MCF 10A (cell line): ENCODE measurements at regions of chr1 and their contacts with region 1.

Region 1: GRCh38 chr1:170765712-170766330 is 101.9 kb downstream of the PRRX1 start:
- DNase-seq: peak; percentile 54
- H3K4me3 Mint-ChIP-seq: no peak overlapping the region
- H3K27ac Mint-ChIP-seq: no peak overlapping the region
- H3K4me1 Mint-ChIP-seq: no peaks in the 10 kb centered on the region
- H3K27me3 Mint-ChIP-seq: no peaks in the 10 kb centered on the region
- CTCF ChIP-seq: peak; percentile 74

Region 2: GRCh38 chr1:169928438-169929209 is 837.2 kb before region 1 on chr1:
- CTCF ChIA-PET with region 1: interaction called, 6 read pairs
- POLR2A ChIA-PET with region 1: no interaction called
- intact Hi-C with region 1: loop called (anchors 1 kb)
- DNase-seq: peak; percentile 67
- H3K4me3 Mint-ChIP-seq: no peak overlapping the region
- H3K27ac Mint-ChIP-seq: no peak overlapping the region
- H3K4me1 Mint-ChIP-seq: no peaks in the 10 kb centered on the region
- H3K27me3 Mint-ChIP-seq: no peaks in the 10 kb centered on the region
- CTCF ChIP-seq: peak; percentile 84

Region 3: GRCh38 chr1:170010443-170010842 is 755.4 kb before region 1 on chr1:
- CTCF ChIA-PET with region 1: interaction called, 6 read pairs
- POLR2A ChIA-PET with region 1: no interaction called
- intact Hi-C with region 1: loop called (anchors 1 kb)
- DNase-seq: peak; percentile 74
- H3K4me3 Mint-ChIP-seq: no peak overlapping the region
- H3K27ac Mint-ChIP-seq: no peak overlapping the region
- H3K4me1 Mint-ChIP-seq: no peaks in the 10 kb centered on the region
- H3K27me3 Mint-ChIP-seq: no peaks in the 10 kb centered on the region
- CTCF ChIP-seq: peak; percentile 54

Region 4: GRCh38 chr1:170436928-170437327 is 328.9 kb before region 1 on chr1:
- CTCF ChIA-PET with region 1: no interaction called
- POLR2A ChIA-PET with region 1: no interaction called
- intact Hi-C with region 1: loop called (anchors 1 kb)
- DNase-seq: no peak
- H3K4me3 Mint-ChIP-seq: no peak overlapping the region
- H3K27ac Mint-ChIP-seq: no peak overlapping the region
- H3K4me1 Mint-ChIP-seq: no peaks in the 10 kb centered on the region
- H3K27me3 Mint-ChIP-seq: no peaks in the 10 kb centered on the region
- CTCF ChIP-seq: no peak

Region 5: GRCh38 chr1:170503691-170504090 is 262.1 kb before region 1 on chr1:
- CTCF ChIA-PET with region 1: no interaction called
- POLR2A ChIA-PET with region 1: no interaction called
- intact Hi-C with region 1: loop called (anchors 10 kb)
- DNase-seq: no peak
- H3K4me3 Mint-ChIP-seq: no peak overlapping the region
- H3K27ac Mint-ChIP-seq: no peak overlapping the region
- H3K4me1 Mint-ChIP-seq: no peaks in the 10 kb centered on the region
- H3K27me3 Mint-ChIP-seq: no peaks in the 10 kb centered on the region
- CTCF ChIP-seq: no peak

Region 6: GRCh38 chr1:170742600-170742999 is 23.2 kb before region 1 on chr1:
- CTCF ChIA-PET with region 1: no interaction called
- POLR2A ChIA-PET with region 1: no interaction called
- intact Hi-C with region 1: no loop called
- DNase-seq: no peak
- H3K4me3 Mint-ChIP-seq: no peak overlapping the region
- H3K27ac Mint-ChIP-seq: no peak overlapping the region
- H3K4me1 Mint-ChIP-seq: no peaks in the 10 kb centered on the region
- H3K27me3 Mint-ChIP-seq: no peaks in the 10 kb centered on the region
- CTCF ChIP-seq: no peak

Region 7: GRCh38 chr1:170755795-170756194 is 10.0 kb before region 1 on chr1:
- CTCF ChIA-PET with region 1: interaction called, 10 read pairs
- POLR2A ChIA-PET with region 1: no interaction called
- intact Hi-C with region 1: no loop called
- DNase-seq: no peak
- H3K4me3 Mint-ChIP-seq: no peak overlapping the region
- H3K27ac Mint-ChIP-seq: no peak overlapping the region
- H3K4me1 Mint-ChIP-seq: no peaks in the 10 kb centered on the region
- H3K27me3 Mint-ChIP-seq: no peaks in the 10 kb centered on the region
- CTCF ChIP-seq: no peak

Region 8: DNA sequence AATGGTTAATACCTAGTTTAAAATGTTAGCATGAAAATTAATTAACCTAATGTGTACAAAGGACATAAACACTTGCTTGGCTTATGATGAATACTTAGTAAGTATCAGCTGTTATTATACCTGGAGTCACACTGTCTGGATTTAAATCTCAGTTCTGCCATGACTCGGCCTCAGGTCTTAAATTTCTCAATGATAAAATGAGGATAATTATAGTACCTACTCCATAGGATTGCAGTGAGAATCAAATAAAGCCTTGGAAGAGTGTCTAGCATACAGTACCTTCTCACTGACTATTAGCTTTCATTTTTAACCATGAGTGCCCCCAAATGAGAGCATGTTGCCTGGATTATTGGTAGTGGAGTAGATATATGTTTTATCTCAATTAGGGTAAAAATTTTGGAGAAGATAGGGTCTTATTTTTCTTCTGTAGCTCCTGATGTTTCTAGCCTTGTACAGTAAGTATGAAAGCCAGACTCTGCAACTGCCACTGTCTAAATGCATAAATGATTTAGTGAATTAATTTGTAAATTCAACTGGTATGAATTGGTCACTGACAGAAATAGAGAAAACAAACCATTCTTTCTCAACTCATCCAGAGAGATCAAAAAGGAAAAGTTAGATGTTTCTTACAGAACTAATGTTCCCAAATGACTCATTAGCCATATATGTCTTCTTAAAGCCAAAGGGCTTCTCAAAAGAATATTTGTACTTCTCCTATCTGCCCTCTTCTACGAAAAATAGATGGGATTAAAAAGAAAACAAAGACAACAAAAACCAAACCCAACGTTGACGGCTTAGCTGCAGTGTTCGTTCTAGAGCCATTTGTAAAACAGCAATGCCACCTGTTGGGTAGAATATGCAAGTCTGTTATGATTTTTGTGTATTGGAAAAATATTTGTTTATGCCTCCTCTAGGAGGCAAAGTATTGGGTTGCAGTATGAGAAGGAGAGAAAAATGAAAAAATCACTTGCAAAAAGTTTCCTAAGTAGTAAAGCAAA is 115.7 kb after region 1 on chr1:
- CTCF ChIA-PET with region 1: interaction called, 3 read pairs
- POLR2A ChIA-PET with region 1: no interaction called
- intact Hi-C with region 1: loop called (anchors 5 kb)
- DNase-seq: peak; percentile 69
- H3K4me3 Mint-ChIP-seq: no peak overlapping the region
- H3K27ac Mint-ChIP-seq: no peak overlapping the region
- H3K4me1 Mint-ChIP-seq: peaks cover 7% of the 10 kb centered on the region
- H3K27me3 Mint-ChIP-seq: peaks cover 12% of the 10 kb centered on the region
- CTCF ChIP-seq: peak; percentile 63